ENCODE measurements at regions of chr5 and their contacts with region 1.

Region 1: GRCh38 chr5:97224112-97224750 is 41.2 kb upstream of the RIOK2 start:
- DNase-seq: no peak
- ATAC-seq: no peak
- H3K4me3 ChIP-seq: no peak overlapping the region
- H3K27ac ChIP-seq: no peak overlapping the region
- H3K4me1 ChIP-seq: peaks cover 0 to 4% (median 0%) of the 10 kb centered on the region in 9 donors
- H3K27me3 ChIP-seq: no peaks in the 10 kb centered on the region
- CTCF ChIP-seq: no peak

Region 2: DNA sequence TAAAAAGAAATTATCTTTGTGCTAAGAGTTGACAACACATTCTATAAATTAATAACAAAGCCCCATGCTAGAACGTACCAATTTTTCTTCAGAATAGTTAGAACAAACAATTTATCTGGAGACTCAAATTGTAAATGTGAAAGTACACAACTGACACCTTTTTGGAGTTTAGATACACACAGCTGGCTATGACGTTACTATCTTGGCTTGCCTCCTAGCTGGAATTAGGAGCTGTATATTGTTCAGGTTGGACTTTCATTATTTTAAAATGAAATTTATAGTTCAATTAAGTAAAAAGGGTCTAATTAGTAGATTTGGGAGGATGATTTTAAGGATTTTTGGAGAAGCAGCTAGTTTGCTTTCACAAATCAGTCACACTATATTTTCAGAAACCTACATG is 352.7 kb after region 1 on chr5:
- intact Hi-C with region 1: no loop called
- DNase-seq: no peak
- ATAC-seq: no peak
- H3K4me3 ChIP-seq: no peak overlapping the region
- H3K27ac ChIP-seq: peak overlapping the region in 1 of 10 donors; percentile 14
- H3K4me1 ChIP-seq: no peaks in the 10 kb centered on the region
- H3K27me3 ChIP-seq: no peaks in the 10 kb centered on the region
- CTCF ChIP-seq: no peak

Region 3: GRCh38 chr5:98796197-98796972 is 1572.2 kb after region 1 on chr5:
- intact Hi-C with region 1: loop called in 2 of 10 experiments (anchors 10 kb)
- DNase-seq: peak in 1 of 2 donors; percentile 50
- ATAC-seq: peak in 7 of 8 donors; percentile 48 to 73 (median 66)
- H3K4me3 ChIP-seq: no peak overlapping the region
- H3K27ac ChIP-seq: no peak overlapping the region
- H3K4me1 ChIP-seq: peaks cover 0 to 22% (median 8%) of the 10 kb centered on the region in 9 donors
- H3K27me3 ChIP-seq: no peaks in the 10 kb centered on the region
- CTCF ChIP-seq: peak; percentile 37 to 86 (median 78)